PC-9 (cell line): ENCODE measurements at regions of chr9 and their contacts with region 1.

Region 1: GRCh38 chr9:81521892-81522291 is 167.5 kb downstream of the TLE1 start:
- DNase-seq: peak in 1 of 2 experiments; percentile 56
- H3K4me3 ChIP-seq: no peak overlapping the region
- H3K27ac ChIP-seq: no peak overlapping the region
- H3K4me1 ChIP-seq: peaks cover 13% of the 10 kb centered on the region; the same call in 1 of the 2 replicates
- H3K27me3 ChIP-seq: no peaks in the 10 kb centered on the region
- CTCF ChIP-seq: no peak

Region 2: GRCh38 chr9:81103597-81104471 is 418.1 kb before region 1 on chr9:
- CTCF ChIA-PET with region 1: no interaction called
- POLR2A ChIA-PET with region 1: no interaction called
- intact Hi-C with region 1: no loop called
- DNase-seq: no peak
- H3K4me3 ChIP-seq: no peak overlapping the region
- H3K27ac ChIP-seq: no peak overlapping the region
- H3K4me1 ChIP-seq: peaks cover 10% of the 10 kb centered on the region
- H3K27me3 ChIP-seq: no peaks in the 10 kb centered on the region
- CTCF ChIP-seq: peak; percentile 45; the same call in 1 of the 2 replicates

Region 3: GRCh38 chr9:81492710-81493447 is 29.0 kb before region 1 on chr9:
- CTCF ChIA-PET with region 1: no interaction called
- POLR2A ChIA-PET with region 1: no interaction called
- intact Hi-C with region 1: no loop called
- DNase-seq: peak; percentile 13 to 79
- H3K4me3 ChIP-seq: no peak overlapping the region
- H3K27ac ChIP-seq: 0 out of 2 replicates have a peak overlapping the region, but pooled peaks have one; percentile 1
- H3K4me1 ChIP-seq: peaks cover 28% of the 10 kb centered on the region
- H3K27me3 ChIP-seq: no peaks in the 10 kb centered on the region
- CTCF ChIP-seq: no peak

Region 4: GRCh38 chr9:81506941-81507864 is 14.7 kb before region 1 on chr9:
- CTCF ChIA-PET with region 1: no interaction called
- POLR2A ChIA-PET with region 1: no interaction called
- intact Hi-C with region 1: no loop called
- DNase-seq: no peak
- H3K4me3 ChIP-seq: no peak overlapping the region
- H3K27ac ChIP-seq: no peak overlapping the region
- H3K4me1 ChIP-seq: no peaks in the 10 kb centered on the region
- H3K27me3 ChIP-seq: no peaks in the 10 kb centered on the region
- CTCF ChIP-seq: no peak

Region 5: DNA sequence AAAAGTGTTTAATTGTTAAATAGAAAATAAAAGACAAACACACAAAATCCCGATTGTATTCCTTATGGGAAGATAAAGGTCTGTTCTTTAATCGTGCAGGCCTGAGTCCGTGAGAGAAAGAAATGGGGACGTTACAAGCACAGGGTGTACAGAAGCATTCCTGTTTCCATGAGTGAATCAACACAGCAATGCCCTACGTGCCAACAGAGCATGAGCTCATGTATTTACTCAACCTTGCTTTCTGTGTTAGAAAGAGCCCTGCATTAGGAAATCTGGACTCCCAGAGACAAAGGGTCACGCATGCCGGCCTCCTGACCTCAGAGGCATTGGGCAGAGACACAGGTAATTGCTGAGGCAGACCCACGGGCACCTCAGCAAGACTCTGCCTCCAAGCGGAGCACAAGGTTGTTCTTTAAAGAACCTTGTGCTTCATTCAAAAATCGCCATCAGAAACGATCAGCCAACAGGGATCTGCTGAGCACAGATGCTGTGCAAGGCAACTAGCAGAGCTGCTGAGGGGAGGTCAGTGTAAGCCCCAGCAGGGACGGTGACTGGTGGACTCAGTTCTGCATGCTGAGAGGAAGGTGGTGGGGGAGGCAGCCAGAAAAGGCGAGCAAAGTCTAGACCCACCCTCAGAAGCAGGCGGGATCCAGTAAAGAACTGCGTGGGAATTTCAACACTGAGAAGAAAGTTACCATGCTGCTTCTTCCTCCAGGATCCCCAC is 66.4 kb after region 1 on chr9:
- CTCF ChIA-PET with region 1: interaction called, 3 read pairs
- POLR2A ChIA-PET with region 1: no interaction called
- intact Hi-C with region 1: loop called (anchors 5 kb)
- DNase-seq: peak in 1 of 2 experiments; percentile 56
- H3K4me3 ChIP-seq: no peak overlapping the region
- H3K27ac ChIP-seq: no peak overlapping the region
- H3K4me1 ChIP-seq: no peaks in the 10 kb centered on the region
- H3K27me3 ChIP-seq: no peaks in the 10 kb centered on the region
- CTCF ChIP-seq: no peak

Region 6: GRCh38 chr9:81759668-81760215 is 237.8 kb after region 1 on chr9:
- CTCF ChIA-PET with region 1: no interaction called
- POLR2A ChIA-PET with region 1: no interaction called
- intact Hi-C with region 1: no loop called
- DNase-seq: peak; percentile 31 to 47
- H3K4me3 ChIP-seq: no peak overlapping the region
- H3K27ac ChIP-seq: no peak overlapping the region
- H3K4me1 ChIP-seq: no peaks in the 10 kb centered on the region
- H3K27me3 ChIP-seq: no peaks in the 10 kb centered on the region
- CTCF ChIP-seq: no peak